Astrocyte of the cerebellum (primary cell): ENCODE measurements at regions of chr10 and their contacts with region 1.

Region 1: DNA sequence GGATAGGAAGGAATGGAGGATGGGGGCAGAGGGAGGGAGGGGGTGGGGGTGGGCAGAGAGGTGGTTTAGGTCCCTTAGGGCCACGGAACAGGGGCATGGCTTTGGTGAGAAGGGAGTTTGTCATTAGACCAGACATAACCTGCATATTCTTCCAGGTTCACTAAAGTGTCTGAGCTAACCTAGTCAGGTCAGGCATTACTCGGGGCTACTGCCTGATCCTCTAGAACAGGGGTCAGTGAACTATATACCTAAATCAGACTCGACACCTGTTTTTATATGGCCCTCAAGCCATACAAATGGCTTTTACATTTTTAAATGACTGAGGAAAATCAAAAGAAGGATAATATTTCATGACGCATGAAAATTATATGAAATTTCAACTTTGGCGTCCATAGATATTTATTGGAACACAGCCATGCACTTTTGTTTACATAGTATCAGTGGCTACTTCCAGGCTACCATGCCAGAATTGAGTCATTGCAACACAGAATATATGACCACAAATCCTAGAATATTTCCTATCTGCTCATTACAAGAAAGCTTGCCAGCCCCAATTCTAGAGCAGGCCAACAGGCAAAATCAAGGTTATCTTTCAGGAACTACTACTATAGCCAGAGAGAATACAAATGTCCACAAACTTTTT is 29.4 kb downstream of the AFAP1L2 start:
- DNase-seq: no peak
- H3K4me3 ChIP-seq: no peak overlapping the region
- CTCF ChIP-seq: no peak

Region 2: DNA sequence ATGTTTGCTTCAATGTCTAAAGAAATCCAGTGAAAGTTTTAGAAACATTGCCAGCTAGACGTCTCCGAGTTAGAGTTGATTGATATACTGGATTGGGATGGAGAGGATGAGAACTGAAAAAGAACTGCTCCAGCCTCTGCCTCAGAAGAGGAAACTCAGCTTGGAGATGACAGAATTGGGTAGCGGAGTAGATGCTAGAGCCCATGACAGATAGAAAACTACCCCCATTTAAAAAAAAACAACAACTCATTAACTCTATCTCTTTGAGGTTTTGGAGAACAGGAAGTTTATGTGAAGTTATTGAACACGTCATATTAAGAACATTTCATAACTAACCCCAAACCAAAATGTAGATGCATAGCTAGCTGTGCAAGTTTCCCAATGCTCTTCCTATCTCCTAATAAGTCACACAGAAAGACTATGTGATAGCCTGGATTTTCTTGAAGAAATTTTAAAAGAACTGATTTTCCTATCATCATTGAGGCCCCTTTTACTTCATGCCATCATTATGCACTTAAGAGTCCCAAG is 57.7 kb after region 1 on chr10:
- in situ Hi-C with region 1: loop called (anchors 5 kb)
- DNase-seq: no peak
- H3K4me3 ChIP-seq: no peak overlapping the region
- CTCF ChIP-seq: no peak